ENCODE measurements at regions of chr12 and their contacts with region 1.

Region 1: GRCh38 chr12:114226241-114226928 is 179.6 kb downstream of the TBX5 start:
- DNase-seq: no peak
- ATAC-seq: no peak
- H3K4me3 ChIP-seq: no peak overlapping the region
- H3K27ac ChIP-seq: no peak overlapping the region
- H3K4me1 ChIP-seq: no peaks in the 10 kb centered on the region
- H3K27me3 ChIP-seq: peaks cover 0 to 12% (median 2%) of the 10 kb centered on the region in 3 donors
- CTCF ChIP-seq: no peak

Region 2: GRCh38 chr12:113912760-113913329 is 313.5 kb before region 1 on chr12:
- intact Hi-C with region 1: no loop called
- DNase-seq: peak; percentile 48 to 69
- ATAC-seq: peak in 3 of 4 donors; percentile 68 to 78 (median 70)
- H3K4me3 ChIP-seq: no peak overlapping the region
- H3K27ac ChIP-seq: no peak overlapping the region
- H3K4me1 ChIP-seq: no peaks in the 10 kb centered on the region
- H3K27me3 ChIP-seq: no peaks in the 10 kb centered on the region
- CTCF ChIP-seq: peak; percentile 83

Region 3: GRCh38 chr12:114257687-114258086 is 31.3 kb after region 1 on chr12:
- intact Hi-C with region 1: loop called in 1 of 2 experiments (anchors 1 kb)
- DNase-seq: no peak
- ATAC-seq: no peak
- H3K4me3 ChIP-seq: no peak overlapping the region
- H3K27ac ChIP-seq: no peak overlapping the region
- H3K4me1 ChIP-seq: no peaks in the 10 kb centered on the region
- H3K27me3 ChIP-seq: peaks cover 0 to 3% (median 0%) of the 10 kb centered on the region in 3 donors
- CTCF ChIP-seq: no peak

Measured in psoas muscle (tissue), 8 donors.